ENCODE measurements at regions of chr4 and their contacts with region 1.

Region 1: GRCh38 chr4:183504064-183504929 is 561 bp upstream of the ING2 start:
- DNase-seq: peak; percentile 99
- ATAC-seq: peak; percentile 94 to 99 (median 96)
- H3K4me3 ChIP-seq: peak overlapping the region; percentile 77 to 100 (median 98)
- H3K27ac ChIP-seq: peak overlapping the region; percentile 78 to 99 (median 97)
- H3K4me1 ChIP-seq: peaks cover 0 to 50% (median 19%) of the 10 kb centered on the region in 9 donors
- H3K27me3 ChIP-seq: no peaks in the 10 kb centered on the region
- CTCF ChIP-seq: peak in 7 of 9 donors; percentile 9 to 55 (median 21)

Region 2: DNA sequence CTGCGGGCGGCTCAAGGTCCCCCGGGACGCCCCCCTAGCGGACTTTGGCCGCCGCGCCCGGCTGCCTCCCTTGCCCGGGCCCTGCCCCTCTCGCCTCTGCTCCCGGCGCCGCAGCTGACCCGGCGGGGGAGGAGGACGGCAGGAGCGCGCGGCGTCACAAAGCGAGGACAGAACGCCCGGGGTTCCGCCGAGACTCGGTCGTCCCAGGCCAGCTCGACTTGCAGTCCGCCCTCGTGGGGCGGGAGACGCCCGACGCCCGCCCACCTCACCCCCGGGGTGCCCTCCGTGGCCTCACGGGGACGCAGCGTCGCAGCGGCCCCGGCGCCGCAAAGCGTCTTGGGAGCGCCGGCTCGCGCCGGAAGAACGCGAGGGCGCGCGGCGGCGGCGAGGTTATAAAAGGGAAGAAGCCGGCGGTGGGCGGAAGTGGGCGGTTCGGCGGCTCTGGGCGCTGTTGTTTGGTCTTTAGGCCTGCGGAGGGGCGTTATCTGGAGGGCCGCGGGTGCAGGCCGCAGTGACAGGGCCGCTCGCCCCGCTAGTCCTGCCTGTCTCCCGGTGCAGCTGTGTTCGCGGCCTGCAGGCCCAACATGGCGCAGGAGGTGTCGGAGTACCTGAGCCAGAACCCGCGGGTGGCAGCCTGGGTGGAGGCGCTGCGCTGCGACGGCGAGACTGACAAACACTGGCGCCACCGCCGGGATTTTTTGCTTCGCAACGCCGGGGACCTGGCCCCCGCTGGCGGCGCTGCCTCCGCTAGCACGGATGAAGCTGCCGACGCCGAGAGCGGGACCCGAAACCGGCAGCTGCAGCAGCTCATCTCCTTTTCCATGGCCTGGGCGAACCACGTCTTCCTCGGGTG is 59.9 kb before region 1 on chr4 and contains the start of gene CDKN2AIP:
- intact Hi-C with region 1: loop called in 4 of 10 experiments (anchors 2 to 10 kb)
- DNase-seq: peak; percentile 94 to 95
- ATAC-seq: peak; percentile 93 to 97 (median 94)
- H3K4me3 ChIP-seq: peak within 1 kb of the TSS; percentile 68 to 99 (median 94)
- H3K27ac ChIP-seq: peak within 1 kb of the TSS; percentile 94 to 100 (median 98)
- H3K4me1 ChIP-seq: peaks cover 0 to 54% (median 48%) of the 10 kb centered on the region in 9 donors
- H3K27me3 ChIP-seq: no peaks in the 10 kb centered on the region
- CTCF ChIP-seq: peak in 6 of 9 donors; percentile 0 to 36 (median 25)
- total RNA-seq, gene CDKN2AIP: 8.0 to 12.7 (median 10.0) TPM

Region 3: GRCh38 chr4:183659029-183659871 is 155.0 kb after region 1 on chr4 and contains the starts of genes RWDD4 and TRAPPC11:
- intact Hi-C with region 1: loop called in 5 of 10 experiments (anchors 2 to 10 kb)
- DNase-seq: peak; percentile 98 to 99
- ATAC-seq: peak; percentile 100
- H3K4me3 ChIP-seq: peak within 1 kb of the TSS; percentile 42 to 98 (median 82)
- H3K27ac ChIP-seq: peak within 1 kb of the TSS; percentile 52 to 98 (median 88)
- H3K4me1 ChIP-seq: peaks cover 3 to 33% (median 22%) of the 10 kb centered on the region in 9 donors
- H3K27me3 ChIP-seq: no peaks in the 10 kb centered on the region
- CTCF ChIP-seq: peak in 5 of 9 donors; percentile 12 to 47 (median 35)
- total RNA-seq, gene RWDD4: 13.7 to 17.8 (median 15.2) TPM
- total RNA-seq, gene TRAPPC11: 15.3 to 24.1 (median 19.6) TPM

Measured in heart right ventricle (tissue), 16 donors.